ENCODE measurements at regions of chr1 and their contacts with region 1.

Region 1: DNA sequence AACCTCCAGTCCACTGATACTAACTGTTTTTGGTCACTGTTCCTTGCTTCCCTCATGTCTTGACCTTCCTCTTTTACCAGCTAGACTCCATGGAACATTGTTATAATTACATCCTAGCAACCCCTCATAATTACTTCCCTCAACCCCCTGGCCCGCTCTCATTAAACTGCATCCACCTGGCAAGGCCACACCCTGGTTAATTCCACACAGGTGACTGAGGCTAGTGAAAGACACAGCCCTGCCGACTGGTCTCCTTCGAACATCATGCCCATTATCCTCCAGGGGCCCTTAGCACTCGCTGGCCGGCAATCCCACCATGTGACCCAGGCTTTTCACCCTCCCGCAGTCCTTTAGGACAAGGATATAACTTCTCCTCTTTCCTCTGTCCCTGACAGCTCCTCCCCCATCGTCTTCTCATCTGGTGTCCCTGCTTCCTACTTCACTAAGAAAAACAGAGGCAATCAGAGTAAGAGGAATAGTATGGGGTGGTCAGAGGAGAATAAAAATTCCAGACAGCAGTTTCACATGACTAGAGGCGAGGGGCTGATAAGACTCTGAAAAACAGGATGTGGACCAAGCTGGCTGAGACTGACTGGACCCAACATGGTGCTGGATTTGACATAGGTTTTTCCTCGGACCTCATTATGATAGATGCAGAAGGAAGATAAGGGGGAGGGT is 8.8 kb upstream of the TENT5B start:
- DNase-seq: no peak
- H3K4me3 ChIP-seq: no peak overlapping the region
- H3K27ac ChIP-seq: no peak overlapping the region
- H3K4me1 ChIP-seq: peaks cover 0 to 6% (median 4%) of the 10 kb centered on the region in 4 experiments
- H3K27me3 ChIP-seq: no peaks in the 10 kb centered on the region; a peak in 1 of 7 replicates
- CTCF ChIP-seq: no peak
- EP300 ChIP-seq: no peak
- POLR2A ChIP-seq: no peak
- RAD21 ChIP-seq: no peak

Region 2: GRCh38 chr1:26970810-26971209 is 50.7 kb before region 1 on chr1:
- CTCF ChIA-PET with region 1: interaction called, 12 read pairs
- POLR2A ChIA-PET with region 1: no interaction called
- DNase-seq: no peak
- H3K4me3 ChIP-seq: no peak overlapping the region
- H3K27ac ChIP-seq: no peak overlapping the region
- H3K4me1 ChIP-seq: peaks cover 0 to 6% (median 3%) of the 10 kb centered on the region in 4 experiments; a peak in 3 of 7 replicates
- H3K27me3 ChIP-seq: no peaks in the 10 kb centered on the region
- CTCF ChIP-seq: no peak
- EP300 ChIP-seq: no peak
- POLR2A ChIP-seq: no peak
- RAD21 ChIP-seq: no peak